AG04449 (cell line): ENCODE measurements at regions of chr11 and their contacts with region 1.

Region 1: GRCh38 chr11:86802601-86803051 is 2.3 kb downstream of the PRSS23 start:
- DNase-seq: no peak
- H3K4me3 ChIP-seq: peak overlapping the region; percentile 82
- CTCF ChIP-seq: peak; percentile 51

Region 2: DNA sequence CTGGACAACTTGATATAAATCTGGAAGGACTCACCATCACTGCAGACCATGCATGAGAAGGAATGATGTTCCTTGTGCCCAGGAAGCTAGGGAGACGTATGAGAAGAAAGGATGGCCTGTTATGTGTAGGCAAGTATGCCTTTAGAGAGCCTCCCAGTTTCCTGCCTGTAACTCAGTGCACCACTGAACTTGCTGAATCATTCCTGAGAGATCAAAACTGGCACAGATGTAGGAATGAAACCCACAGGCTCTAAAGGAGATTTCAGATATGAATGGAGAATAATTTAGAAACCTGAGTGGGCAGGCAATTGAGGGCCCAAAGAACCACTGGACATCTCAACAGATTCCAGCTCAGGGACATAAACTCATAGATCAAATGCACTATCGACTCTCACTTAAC is 40.6 kb before region 1 on chr11:
- CTCF ChIA-PET with region 1: no interaction called
- POLR2A ChIA-PET with region 1: interaction called, 13 read pairs
- DNase-seq: no peak
- H3K4me3 ChIP-seq: no peak overlapping the region
- CTCF ChIP-seq: no peak

Region 3: GRCh38 chr11:86784241-86784681 is 18.4 kb before region 1 on chr11:
- CTCF ChIA-PET with region 1: interaction called, 11 read pairs
- POLR2A ChIA-PET with region 1: interaction called, 9 read pairs
- DNase-seq: no peak
- H3K4me3 ChIP-seq: no peak overlapping the region
- CTCF ChIP-seq: no peak